Heart left ventricle (tissue), 16 donors: ENCODE measurements at regions of chr5 and their contacts with region 1.

Region 1: GRCh38 chr5:180007582-180007981 is 64.0 kb downstream of the RNF130 start:
- DNase-seq: peak in 3 of 5 donors; percentile 15 to 56 (median 35)
- ATAC-seq: peak; percentile 85 to 96 (median 92)
- H3K4me3 ChIP-seq: no peak overlapping the region
- H3K27ac ChIP-seq: peak overlapping the region in 6 of 12 donors; percentile 33 to 68 (median 40)
- H3K4me1 ChIP-seq: peaks cover 0 to 21% (median 13%) of the 10 kb centered on the region in 12 donors
- H3K27me3 ChIP-seq: no peaks in the 10 kb centered on the region
- CTCF ChIP-seq: no peak
- POLR2A ChIP-seq: no peak

Region 2: DNA sequence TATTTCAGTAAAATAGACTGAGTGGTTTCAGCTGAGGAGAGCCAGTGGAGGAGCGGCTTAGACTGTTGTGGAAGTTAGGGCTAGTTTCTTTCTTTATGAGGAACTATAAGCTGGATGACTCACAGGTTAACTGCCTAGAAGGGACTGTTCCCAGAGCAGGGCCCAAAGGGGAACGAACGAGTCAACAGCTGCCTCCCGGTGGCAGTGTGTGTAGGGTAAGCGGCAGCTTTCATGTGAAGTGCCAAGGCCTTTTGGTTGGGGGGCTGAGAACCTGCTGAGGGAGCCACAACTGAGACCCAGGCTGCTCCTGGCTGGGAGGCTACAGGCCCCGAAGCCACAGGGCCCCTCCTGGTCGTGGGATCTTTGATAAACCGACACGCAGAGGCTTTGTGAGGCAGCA is 179.9 kb before region 1 on chr5:
- intact Hi-C with region 1: no loop called
- DNase-seq: peak in 3 of 5 donors; percentile 54 to 66 (median 55)
- ATAC-seq: peak in 3 of 4 donors; percentile 25 to 69 (median 38)
- H3K4me3 ChIP-seq: no peak overlapping the region
- H3K27ac ChIP-seq: peak overlapping the region in 4 of 12 donors; percentile 7 to 62 (median 27)
- H3K4me1 ChIP-seq: peaks cover 10 to 56% (median 46%) of the 10 kb centered on the region in 12 donors
- H3K27me3 ChIP-seq: no peaks in the 10 kb centered on the region
- CTCF ChIP-seq: no peak
- POLR2A ChIP-seq: no peak

Region 3: DNA sequence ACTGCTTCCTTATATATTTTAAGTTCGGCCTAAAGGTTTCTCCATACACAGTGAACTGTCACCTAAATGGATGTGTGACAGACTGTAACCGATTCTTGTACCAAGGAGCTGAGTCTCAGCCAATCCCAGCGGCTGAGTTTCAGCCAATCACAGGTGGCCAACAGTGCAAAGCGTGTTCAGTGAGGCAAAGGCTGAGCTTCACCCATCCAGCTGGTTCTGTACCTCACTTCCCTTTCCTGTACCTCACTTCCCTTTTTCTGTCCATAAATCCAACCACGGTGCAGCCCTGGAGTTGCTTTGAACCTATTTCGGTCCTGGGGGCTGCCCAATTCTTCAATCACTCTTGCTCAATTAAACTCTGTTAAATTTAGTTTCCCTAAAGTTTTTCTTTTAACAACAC is 84.1 kb before region 1 on chr5:
- intact Hi-C with region 1: no loop called
- DNase-seq: no peak
- ATAC-seq: no peak
- H3K4me3 ChIP-seq: no peak overlapping the region
- H3K27ac ChIP-seq: no peak overlapping the region
- H3K4me1 ChIP-seq: no peaks in the 10 kb centered on the region
- H3K27me3 ChIP-seq: no peaks in the 10 kb centered on the region
- CTCF ChIP-seq: no peak
- POLR2A ChIP-seq: no peak

Region 4: GRCh38 chr5:180071531-180072255 is 64.1 kb after region 1 on chr5 and contains the start of gene RNF130:
- intact Hi-C with region 1: loop called in 3 of 10 experiments (anchors 1 to 10 kb)
- DNase-seq: peak; percentile 95 to 98 (median 96)
- ATAC-seq: peak; percentile 89 to 98 (median 96)
- H3K4me3 ChIP-seq: peak within 1 kb of the TSS; percentile 75 to 99 (median 90)
- H3K27ac ChIP-seq: peak within 1 kb of the TSS; percentile 91 to 100 (median 98)
- H3K4me1 ChIP-seq: peaks cover 0 to 38% (median 15%) of the 10 kb centered on the region in 12 donors
- H3K27me3 ChIP-seq: no peaks in the 10 kb centered on the region
- CTCF ChIP-seq: peak in 1 of 12 donors; percentile 19
- POLR2A ChIP-seq: peak in 1 of 2 donors; percentile 57
- total RNA-seq, gene RNF130: 34.4 to 76.2 (median 40.5) TPM

Region 5: DNA sequence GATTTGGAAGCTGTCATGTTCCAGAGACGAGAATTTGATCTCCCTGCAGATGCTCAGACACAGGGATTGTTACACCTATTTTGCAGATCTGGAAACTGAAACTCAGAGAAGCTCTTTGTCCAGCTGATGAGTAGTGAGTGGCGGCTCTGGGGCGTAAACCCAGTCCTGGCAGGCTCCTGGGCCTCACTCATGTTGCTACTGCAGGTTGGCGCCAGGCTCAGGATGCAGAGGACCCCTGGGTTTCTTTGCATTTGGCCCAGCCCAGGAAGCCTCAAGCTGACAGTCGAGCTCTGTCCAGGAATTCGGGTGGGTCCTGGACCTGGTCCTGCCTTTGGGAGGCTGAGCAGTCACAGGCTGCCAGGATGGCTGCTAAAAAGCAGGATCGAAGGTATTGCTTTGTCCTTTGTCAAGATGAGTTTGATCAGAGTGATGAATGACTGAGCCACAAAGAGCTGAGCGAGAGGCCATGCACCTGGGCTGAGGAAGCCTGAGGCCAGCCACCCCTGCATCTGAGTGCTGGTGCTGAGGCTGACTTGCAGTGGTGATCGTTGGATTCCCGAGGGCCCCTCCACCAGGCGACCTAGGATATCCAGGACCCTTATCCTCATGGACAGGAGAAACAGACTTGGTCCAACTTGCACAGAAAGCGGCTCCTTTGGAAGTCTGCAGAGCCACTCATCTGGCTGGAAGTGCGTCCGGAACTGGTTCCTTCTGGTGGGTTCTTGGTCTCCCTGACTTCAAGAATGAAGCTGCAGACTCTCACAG is 72.3 kb after region 1 on chr5:
- intact Hi-C with region 1: loop called in 2 of 10 experiments (anchors 5 to 10 kb)
- DNase-seq: no peak
- ATAC-seq: no peak
- H3K4me3 ChIP-seq: peak overlapping the region in 1 of 12 donors; percentile 8
- H3K27ac ChIP-seq: no peak overlapping the region
- H3K4me1 ChIP-seq: peaks cover 0 to 3% (median 0%) of the 10 kb centered on the region in 12 donors
- H3K27me3 ChIP-seq: peaks cover 0 to 18% (median 0%) of the 10 kb centered on the region in 9 donors
- CTCF ChIP-seq: no peak
- POLR2A ChIP-seq: no peak